Sciatic nerve (tissue), 2 donors: ENCODE measurements at regions of chr16 and their contacts with region 1.

Region 1: DNA sequence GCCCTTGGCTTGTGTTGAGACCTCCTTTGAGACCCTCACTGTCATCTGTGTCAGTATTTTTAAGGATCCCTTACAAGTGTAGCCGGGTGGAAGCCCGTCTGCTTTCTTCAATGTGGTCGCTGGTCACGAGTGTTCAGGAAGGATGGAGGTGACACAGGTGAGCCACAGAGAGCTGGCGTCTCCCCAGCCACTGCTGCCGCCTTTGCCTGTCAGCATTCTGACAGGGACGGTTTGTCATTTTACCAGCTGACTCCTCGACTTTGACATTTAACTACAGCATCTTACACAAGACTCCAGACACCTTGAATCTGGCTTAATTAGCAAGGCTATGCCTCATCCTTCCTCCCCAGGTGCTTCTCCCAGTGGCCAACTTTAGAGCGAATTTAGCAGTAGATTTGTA is 56.3 kb upstream of the MPHOSPH6 start:
- DNase-seq: no peak
- ATAC-seq: no peak

Region 2: GRCh38 chr16:82031116-82032084 is 194.9 kb before region 1 on chr16:
- intact Hi-C with region 1: loop called (anchors 2 kb)
- DNase-seq: no peak
- ATAC-seq: no peak